Activated CD8-positive, alpha-beta memory T cell treated with anti-CD3 and anti-CD28 coated beads, Interleukin-2, amount 10 ng/mL, durations not matched to agents 7 days and 5 days (primary cell): ENCODE measurements at regions of chr1 and their contacts with region 1.

Region 1: DNA sequence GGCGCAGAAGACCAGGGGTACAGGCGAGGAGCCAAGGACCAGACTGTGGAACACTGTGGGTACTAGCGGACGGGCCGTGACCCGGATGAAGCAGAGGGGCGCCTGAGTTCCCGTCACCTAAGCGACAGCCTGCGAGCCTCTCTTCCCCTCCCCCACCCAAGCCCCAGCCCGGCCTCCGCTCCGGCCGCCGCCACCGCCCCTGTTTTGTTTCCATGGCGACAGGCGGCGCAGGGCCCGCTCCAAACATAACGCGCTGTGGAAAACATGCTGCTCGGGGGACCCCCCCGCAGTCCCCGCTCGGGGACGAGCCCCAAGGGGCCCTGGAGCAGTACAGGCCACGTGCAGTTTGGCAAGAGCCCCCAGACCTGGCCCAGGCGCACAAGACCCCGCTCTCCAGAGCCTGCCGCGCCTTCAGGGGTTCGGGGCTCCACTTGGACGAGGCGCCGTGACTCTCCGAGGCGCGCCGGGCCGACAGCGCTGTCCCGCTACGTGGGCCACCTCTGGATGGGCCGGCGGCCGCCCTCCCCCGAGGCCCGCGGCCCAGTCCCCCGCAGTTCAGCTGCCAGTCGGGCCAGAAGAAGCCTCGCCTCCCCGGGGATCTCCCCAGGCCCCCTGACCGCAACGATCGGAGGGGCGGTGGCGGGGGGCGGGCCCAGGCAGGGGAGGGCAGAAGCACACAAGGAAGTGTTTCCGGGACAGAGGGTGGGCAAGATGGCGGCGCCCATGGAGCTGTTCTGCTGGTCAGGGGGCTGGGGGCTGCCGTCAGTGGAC is at the start of gene MTX1:
- DNase-seq: peak; percentile 92
- ATAC-seq: peak; percentile 78
- H3K4me3 Mint-ChIP-seq: peak within 1 kb of the TSS; percentile 83
- H3K27ac Mint-ChIP-seq: peak within 1 kb of the TSS; percentile 88
- H3K4me1 Mint-ChIP-seq: peaks cover 34% of the 10 kb centered on the region
- H3K27me3 Mint-ChIP-seq: no peaks in the 10 kb centered on the region
- total RNA-seq, gene MTX1: 39.0 to 48.6 TPM

Region 2: GRCh38 chr1:155193275-155193990 is 15.3 kb before region 1 on chr1:
- CTCF ChIA-PET with region 1: interaction called, 87 read pairs
- DNase-seq: peak; percentile 86
- ATAC-seq: peak; percentile 66
- H3K4me3 Mint-ChIP-seq: peak overlapping the region; percentile 73
- H3K27ac Mint-ChIP-seq: peak overlapping the region; percentile 92
- H3K4me1 Mint-ChIP-seq: peaks cover 29% of the 10 kb centered on the region
- H3K27me3 Mint-ChIP-seq: no peaks in the 10 kb centered on the region

Region 3: GRCh38 chr1:155227261-155228095 is 18.8 kb after region 1 on chr1:
- CTCF ChIA-PET with region 1: interaction called, 77 read pairs
- DNase-seq: peak; percentile 100
- ATAC-seq: peak; percentile 97
- H3K4me3 Mint-ChIP-seq: peak overlapping the region; percentile 98
- H3K27ac Mint-ChIP-seq: peak overlapping the region; percentile 98
- H3K4me1 Mint-ChIP-seq: peaks cover 41% of the 10 kb centered on the region
- H3K27me3 Mint-ChIP-seq: no peaks in the 10 kb centered on the region

Region 4: GRCh38 chr1:155244368-155245162 is 35.8 kb after region 1 on chr1:
- CTCF ChIA-PET with region 1: interaction called, 41 read pairs
- DNase-seq: peak; percentile 100
- ATAC-seq: peak; percentile 97
- H3K4me3 Mint-ChIP-seq: peak overlapping the region; percentile 74
- H3K27ac Mint-ChIP-seq: peak overlapping the region; percentile 98
- H3K4me1 Mint-ChIP-seq: peaks cover 51% of the 10 kb centered on the region
- H3K27me3 Mint-ChIP-seq: peaks cover 3% of the 10 kb centered on the region